ENCODE measurements at regions of chr19 and their contacts with region 1.

Region 1: DNA sequence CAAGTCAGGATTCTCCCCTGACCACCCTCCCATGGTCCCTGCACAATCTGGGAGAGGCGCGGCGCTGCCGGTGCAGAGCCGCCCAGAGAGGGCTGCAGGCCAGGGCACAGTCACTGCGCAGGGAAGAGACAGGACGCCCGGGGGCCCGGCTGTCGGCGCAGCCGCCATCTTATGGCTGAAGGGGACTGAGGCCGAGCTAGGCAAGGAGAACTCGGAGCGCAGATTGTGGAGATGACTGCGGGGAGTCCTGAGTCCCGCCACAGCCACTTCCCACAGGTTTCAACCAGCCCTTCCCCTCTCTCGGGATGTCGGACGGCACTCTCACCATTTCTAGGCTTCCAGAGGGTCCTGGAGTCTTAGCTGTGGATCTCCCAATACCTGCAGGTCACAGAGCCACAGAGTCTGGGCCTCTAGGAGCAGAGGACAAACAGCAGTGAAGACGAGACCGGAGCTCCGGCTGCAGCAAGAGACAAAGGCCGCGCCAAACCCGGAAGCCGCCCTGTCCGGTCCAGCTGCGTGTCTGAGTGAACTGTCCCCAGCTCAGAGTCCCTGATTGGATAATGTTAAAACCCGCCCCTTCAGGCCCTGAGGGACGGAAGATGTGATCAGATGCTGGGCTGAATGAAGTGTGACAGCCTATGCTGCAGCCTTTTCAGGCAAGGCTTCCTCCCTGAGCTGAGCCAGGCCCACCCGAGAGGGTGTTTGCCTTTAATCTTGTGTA is at the start of gene ZNF708:
- DNase-seq: peak; percentile 89
- H3K4me3 Mint-ChIP-seq: peak within 1 kb of the TSS; percentile 96
- H3K27ac Mint-ChIP-seq: peak within 1 kb of the TSS; percentile 99
- H3K4me1 Mint-ChIP-seq: peaks cover 33% of the 10 kb centered on the region
- H3K27me3 Mint-ChIP-seq: no peaks in the 10 kb centered on the region
- total RNA-seq, gene ZNF708: 10.1 to 11.1 TPM

Region 2: GRCh38 chr19:21358768-21359451 is 29.9 kb after region 1 on chr19 and contains the start of gene ZNF738:
- CTCF ChIA-PET with region 1: interaction called, 3 read pairs
- POLR2A ChIA-PET with region 1: interaction called, 15 read pairs
- intact Hi-C with region 1: loop called (anchors 2 kb)
- DNase-seq: peak; percentile 92
- H3K4me3 Mint-ChIP-seq: peak within 1 kb of the TSS; percentile 99
- H3K27ac Mint-ChIP-seq: peak within 1 kb of the TSS; percentile 95
- H3K4me1 Mint-ChIP-seq: peaks cover 12% of the 10 kb centered on the region
- H3K27me3 Mint-ChIP-seq: no peaks in the 10 kb centered on the region
- total RNA-seq, gene ZNF738: 11.8 to 15.3 TPM

Region 3: GRCh38 chr19:21396893-21397572 is 68.0 kb after region 1 on chr19 and contains the start of gene ZNF493:
- CTCF ChIA-PET with region 1: no interaction called
- POLR2A ChIA-PET with region 1: interaction called, 9 read pairs
- intact Hi-C with region 1: loop called (anchors 2 kb)
- DNase-seq: peak; percentile 95
- H3K4me3 Mint-ChIP-seq: peak within 1 kb of the TSS; percentile 95
- H3K27ac Mint-ChIP-seq: peak within 1 kb of the TSS; percentile 87
- H3K4me1 Mint-ChIP-seq: peaks cover 24% of the 10 kb centered on the region
- H3K27me3 Mint-ChIP-seq: no peaks in the 10 kb centered on the region
- total RNA-seq, gene ZNF493: 9.6 to 11.1 TPM

Region 4: DNA sequence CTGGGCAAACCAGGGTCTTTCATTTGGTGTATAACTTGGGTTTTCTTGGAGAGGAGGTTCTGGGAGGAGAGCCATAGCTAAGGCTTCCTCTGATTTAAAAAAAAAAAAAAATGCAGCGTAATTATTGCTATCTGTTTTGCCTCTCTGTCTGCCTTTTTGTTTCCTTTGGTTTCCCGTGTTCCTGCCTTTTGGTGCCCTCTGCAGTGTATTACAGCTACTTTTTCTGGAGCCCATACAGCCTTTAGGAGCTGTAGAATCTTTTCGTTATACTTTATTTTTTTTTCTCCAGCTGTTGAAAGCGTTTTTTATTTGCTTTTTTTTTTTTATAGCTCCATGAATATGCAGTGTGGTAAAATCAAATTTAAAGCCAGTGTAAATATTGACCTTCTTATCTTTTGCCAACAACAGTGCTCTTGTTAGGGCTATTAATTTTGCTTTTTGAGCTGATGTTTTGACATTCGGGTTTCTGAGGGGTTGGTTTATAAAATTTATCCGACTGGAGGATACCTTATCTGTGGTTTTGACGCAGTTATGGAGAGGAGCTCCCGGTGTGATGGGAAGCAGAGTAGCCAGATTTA is 106.0 kb after region 1 on chr19:
- CTCF ChIA-PET with region 1: no interaction called
- POLR2A ChIA-PET with region 1: no interaction called
- intact Hi-C with region 1: no loop called
- DNase-seq: no peak
- H3K4me3 Mint-ChIP-seq: no peak overlapping the region
- H3K27ac Mint-ChIP-seq: no peak overlapping the region
- H3K4me1 Mint-ChIP-seq: no peaks in the 10 kb centered on the region
- H3K27me3 Mint-ChIP-seq: no peaks in the 10 kb centered on the region

Region 5: GRCh38 chr19:21482863-21483276 is 153.8 kb after region 1 on chr19:
- CTCF ChIA-PET with region 1: interaction called, 13 read pairs
- POLR2A ChIA-PET with region 1: no interaction called
- intact Hi-C with region 1: no loop called
- DNase-seq: peak; percentile 81
- H3K4me3 Mint-ChIP-seq: peak overlapping the region; percentile 26
- H3K27ac Mint-ChIP-seq: peak overlapping the region; percentile 38
- H3K4me1 Mint-ChIP-seq: peaks cover 2% of the 10 kb centered on the region
- H3K27me3 Mint-ChIP-seq: no peaks in the 10 kb centered on the region

Region 6: GRCh38 chr19:21568816-21569493 is 239.9 kb after region 1 on chr19:
- CTCF ChIA-PET with region 1: no interaction called
- POLR2A ChIA-PET with region 1: no interaction called
- intact Hi-C with region 1: loop called (anchors 5 kb)
- DNase-seq: peak; percentile 92
- H3K4me3 Mint-ChIP-seq: peak overlapping the region; percentile 94
- H3K27ac Mint-ChIP-seq: peak overlapping the region; percentile 91
- H3K4me1 Mint-ChIP-seq: peaks cover 23% of the 10 kb centered on the region
- H3K27me3 Mint-ChIP-seq: no peaks in the 10 kb centered on the region